Natural killer cell (primary cell): ENCODE measurements at regions of chr14 and their contacts with region 1.

Region 1: GRCh38 chr14:75002392-75003249 is at the start of gene EIF2B2:
- DNase-seq: peak; percentile 97 to 99
- ATAC-seq: peak; percentile 93 to 99 (median 93)
- H3K4me3 ChIP-seq: peak within 1 kb of the TSS; percentile 71
- H3K4me3 Mint-ChIP-seq: peak within 1 kb of the TSS; percentile 98
- H3K27ac ChIP-seq: peak within 1 kb of the TSS; percentile 99
- H3K27ac Mint-ChIP-seq: peak within 1 kb of the TSS; percentile 94 to 95
- H3K4me1 ChIP-seq: peaks cover 21% of the 10 kb centered on the region
- H3K4me1 Mint-ChIP-seq: peaks cover 55 to 58% of the 10 kb centered on the region in 2 donors
- H3K27me3 ChIP-seq: no peaks in the 10 kb centered on the region
- H3K27me3 Mint-ChIP-seq: no peaks in the 10 kb centered on the region
- CTCF ChIP-seq: no peak
- total RNA-seq, gene EIF2B2: 22.2 to 45.1 (median 31.2) TPM

Region 2: DNA sequence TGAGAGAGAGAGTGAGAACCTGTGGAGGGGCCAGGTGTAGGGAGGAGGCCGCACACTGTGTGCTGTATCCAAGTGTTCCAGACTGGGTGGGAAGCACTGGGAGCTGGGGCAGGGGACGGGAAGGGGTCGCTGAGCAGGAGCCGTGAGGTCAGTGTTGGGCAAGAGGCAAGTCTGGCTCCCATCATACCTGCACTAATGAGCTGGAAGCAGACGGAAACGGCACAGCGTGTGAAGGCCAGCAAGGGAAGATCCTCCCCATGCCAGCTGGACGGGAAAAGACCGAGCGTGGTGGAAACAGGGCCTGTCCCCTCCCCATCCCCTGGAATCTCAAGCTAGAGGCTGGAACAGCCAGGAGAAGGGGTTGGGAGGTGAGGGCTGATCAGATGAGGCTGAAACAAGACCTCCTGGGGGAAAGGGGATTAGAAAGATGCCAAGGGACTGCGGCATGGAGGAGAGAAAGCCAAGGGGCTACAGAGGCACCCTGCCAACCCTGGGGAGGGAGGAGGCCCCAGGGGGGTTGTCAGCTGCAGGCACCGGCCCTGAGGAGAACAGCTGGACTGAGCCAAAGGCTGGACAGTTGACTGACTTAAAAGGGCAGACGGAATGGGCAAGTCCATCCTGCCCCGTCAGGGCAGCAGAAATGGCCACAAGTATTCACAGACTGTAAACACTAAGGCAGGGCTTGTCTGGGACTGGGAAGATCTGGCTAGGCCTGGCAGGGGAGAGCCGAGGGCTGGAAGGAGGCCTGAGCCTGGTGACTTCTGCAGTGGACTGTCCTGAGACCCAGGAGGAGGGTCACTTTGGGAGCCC is 371.5 kb before region 1 on chr14:
- intact Hi-C with region 1: no loop called
- DNase-seq: no peak
- ATAC-seq: no peak
- H3K4me3 ChIP-seq: no peak overlapping the region
- H3K4me3 Mint-ChIP-seq: no peak overlapping the region
- H3K27ac ChIP-seq: no peak overlapping the region
- H3K27ac Mint-ChIP-seq: no peak overlapping the region
- H3K4me1 ChIP-seq: peaks cover 18% of the 10 kb centered on the region
- H3K4me1 Mint-ChIP-seq: peaks cover 11 to 45% of the 10 kb centered on the region in 2 donors
- H3K27me3 ChIP-seq: no peaks in the 10 kb centered on the region
- H3K27me3 Mint-ChIP-seq: peaks cover 0 to 4% of the 10 kb centered on the region in 2 donors
- CTCF ChIP-seq: no peak

Region 3: DNA sequence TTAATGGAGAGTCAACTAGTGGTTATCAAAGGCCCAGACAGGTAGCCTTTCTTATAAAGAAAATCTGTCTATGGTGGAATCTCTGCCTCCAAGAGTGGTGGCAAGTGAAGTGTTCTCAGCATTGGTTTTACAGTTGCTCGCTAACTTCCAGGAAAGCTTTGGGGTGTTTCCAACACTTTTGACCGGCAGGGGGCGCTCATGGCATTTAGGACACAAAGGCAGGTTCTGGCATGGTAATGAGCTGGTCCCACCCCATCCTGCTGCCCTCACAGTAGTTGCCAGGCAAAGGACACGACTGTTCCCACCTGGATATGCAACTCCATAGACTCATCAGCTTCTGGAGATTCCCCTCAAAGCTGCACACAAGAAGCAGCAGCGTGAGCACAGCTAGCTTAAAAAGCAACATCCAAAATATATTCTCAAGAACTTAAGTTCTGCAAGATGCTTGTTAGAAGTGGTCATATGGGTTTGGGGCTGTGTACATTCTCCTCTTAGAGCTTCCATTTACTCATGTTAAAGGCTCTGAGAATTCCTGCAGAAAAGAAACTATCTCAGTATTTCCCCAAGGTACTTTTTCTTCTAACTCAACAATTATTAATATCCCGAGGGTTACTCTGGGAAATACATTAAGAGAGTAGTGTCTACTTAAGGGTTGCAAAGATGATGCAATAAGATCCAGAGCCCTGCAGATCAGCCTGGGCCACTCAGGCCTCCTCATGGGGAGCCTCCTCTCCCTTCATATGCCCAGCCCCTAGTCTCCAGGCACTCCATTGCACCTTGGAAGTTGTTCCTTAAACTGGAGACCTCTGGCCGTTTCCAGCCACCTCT is 141.5 kb before region 1 on chr14:
- intact Hi-C with region 1: loop called (anchors 10 kb)
- DNase-seq: peak; percentile 92
- ATAC-seq: peak; percentile 81 to 94 (median 88)
- H3K4me3 ChIP-seq: no peak overlapping the region
- H3K4me3 Mint-ChIP-seq: no peak overlapping the region
- H3K27ac ChIP-seq: no peak overlapping the region
- H3K27ac Mint-ChIP-seq: no peak overlapping the region
- H3K4me1 ChIP-seq: peaks cover 5% of the 10 kb centered on the region
- H3K4me1 Mint-ChIP-seq: peaks cover 3 to 9% of the 10 kb centered on the region in 2 donors
- H3K27me3 ChIP-seq: no peaks in the 10 kb centered on the region
- H3K27me3 Mint-ChIP-seq: no peaks in the 10 kb centered on the region
- CTCF ChIP-seq: peak; percentile 84

Region 4: GRCh38 chr14:74945823-74946682 is 56.6 kb before region 1 on chr14:
- intact Hi-C with region 1: loop called (anchors 2 kb)
- DNase-seq: peak; percentile 68 to 87
- ATAC-seq: peak; percentile 78 to 88 (median 83)
- H3K4me3 ChIP-seq: no peak overlapping the region
- H3K4me3 Mint-ChIP-seq: peak overlapping the region; percentile 64
- H3K27ac ChIP-seq: no peak overlapping the region
- H3K27ac Mint-ChIP-seq: peak overlapping the region; percentile 32 to 84
- H3K4me1 ChIP-seq: peaks cover 30% of the 10 kb centered on the region
- H3K4me1 Mint-ChIP-seq: peaks cover 33 to 35% of the 10 kb centered on the region in 2 donors
- H3K27me3 ChIP-seq: no peaks in the 10 kb centered on the region
- H3K27me3 Mint-ChIP-seq: no peaks in the 10 kb centered on the region
- CTCF ChIP-seq: peak; percentile 94

Region 5: GRCh38 chr14:75063407-75064213 is 61.0 kb after region 1 on chr14 and contains the start of gene ACYP1:
- intact Hi-C with region 1: loop called (anchors 5 kb)
- DNase-seq: peak; percentile 92 to 93
- ATAC-seq: peak; percentile 98 to 100 (median 99)
- H3K4me3 ChIP-seq: peak within 1 kb of the TSS; percentile 97
- H3K4me3 Mint-ChIP-seq: peak within 1 kb of the TSS; percentile 100
- H3K27ac ChIP-seq: peak within 1 kb of the TSS; percentile 82
- H3K27ac Mint-ChIP-seq: peak within 1 kb of the TSS; percentile 94 to 97
- H3K4me1 ChIP-seq: peaks cover 13% of the 10 kb centered on the region
- H3K4me1 Mint-ChIP-seq: peaks cover 18 to 22% of the 10 kb centered on the region in 2 donors
- H3K27me3 ChIP-seq: no peaks in the 10 kb centered on the region
- H3K27me3 Mint-ChIP-seq: no peaks in the 10 kb centered on the region
- CTCF ChIP-seq: no peak
- total RNA-seq, gene ACYP1: 13.3 to 17.4 (median 14.9) TPM

Region 6: DNA sequence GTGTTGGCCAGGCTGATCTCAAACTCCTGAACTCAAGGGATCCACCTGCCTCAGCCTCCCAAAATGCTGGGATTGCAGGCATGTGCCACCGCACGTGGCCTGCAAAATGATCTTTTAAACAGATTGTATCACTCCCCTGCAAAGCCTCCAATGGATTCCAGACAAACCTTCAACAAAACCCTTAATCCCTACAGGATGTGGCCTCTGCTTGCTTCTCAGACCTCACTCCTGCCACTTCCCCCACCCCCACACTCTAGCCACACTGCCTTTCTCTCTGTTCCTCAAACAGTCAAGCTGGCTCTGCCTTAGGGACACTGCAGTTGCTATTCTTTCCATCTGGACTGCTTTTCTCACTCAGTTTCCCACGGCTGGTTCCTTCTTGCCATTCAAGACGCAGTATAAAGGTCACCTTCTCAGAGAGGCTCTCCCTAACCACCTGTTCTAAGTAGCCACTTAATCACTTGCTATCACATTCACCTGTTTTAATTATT is 221.1 kb after region 1 on chr14:
- intact Hi-C with region 1: no loop called
- DNase-seq: no peak
- ATAC-seq: peak in 1 of 3 donors; percentile 46
- H3K4me3 ChIP-seq: no peak overlapping the region
- H3K4me3 Mint-ChIP-seq: no peak overlapping the region
- H3K27ac ChIP-seq: no peak overlapping the region
- H3K27ac Mint-ChIP-seq: peak overlapping the region in 1 of 2 donors; percentile 68
- H3K4me1 ChIP-seq: peaks cover 34% of the 10 kb centered on the region
- H3K4me1 Mint-ChIP-seq: peaks cover 18 to 42% of the 10 kb centered on the region in 2 donors
- H3K27me3 ChIP-seq: no peaks in the 10 kb centered on the region
- H3K27me3 Mint-ChIP-seq: peaks cover 0 to 4% of the 10 kb centered on the region in 2 donors
- CTCF ChIP-seq: no peak